ENCODE measurements at regions of chr17 and their contacts with region 1.

Region 1: DNA sequence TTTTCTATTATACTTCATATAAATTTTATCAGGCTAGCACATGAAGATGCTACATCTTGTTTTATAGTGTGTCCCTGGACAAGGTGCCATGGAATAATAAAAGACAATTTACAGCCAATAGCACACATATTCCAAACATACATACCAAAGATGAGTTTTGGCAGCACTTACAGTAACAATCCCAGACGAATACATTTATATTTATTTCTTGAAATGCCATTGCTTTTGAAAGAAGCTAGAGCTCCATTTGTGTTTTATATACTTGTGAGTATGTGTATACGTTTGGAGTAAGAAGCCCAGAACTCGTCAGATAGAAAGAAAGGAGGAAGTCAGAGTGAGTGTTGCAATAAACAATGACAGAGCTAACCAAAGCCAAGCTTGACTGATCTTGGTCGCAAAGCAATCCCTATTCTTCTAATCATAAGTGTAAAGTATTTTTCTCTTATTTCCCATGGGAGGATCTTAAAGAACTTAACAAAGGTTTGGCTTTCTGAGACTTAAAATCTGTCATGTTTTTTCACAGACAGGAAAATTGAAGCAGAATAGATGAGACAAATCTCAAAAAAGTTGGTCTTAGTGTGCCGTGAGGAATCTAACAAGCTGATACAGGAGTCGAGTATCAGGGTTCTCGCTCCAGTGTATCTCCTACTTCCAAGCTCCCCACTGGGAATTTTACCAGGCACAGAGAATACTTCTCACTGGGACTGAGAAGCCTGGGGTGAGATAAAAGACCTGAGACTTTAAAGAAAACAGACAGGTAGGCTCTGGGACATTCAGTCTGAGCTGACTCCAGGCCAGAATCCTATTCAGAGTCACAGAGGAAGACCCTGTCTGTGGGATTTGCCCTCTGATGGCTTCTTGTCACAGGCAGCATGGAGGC is 175.4 kb downstream of the AATF start:
- DNase-seq: no peak
- ATAC-seq: no peak
- H3K4me3 ChIP-seq: no peak overlapping the region
- H3K27ac ChIP-seq: no peak overlapping the region
- H3K4me1 ChIP-seq: no peaks in the 10 kb centered on the region
- H3K27me3 ChIP-seq: no peaks in the 10 kb centered on the region
- CTCF ChIP-seq: no peak

Region 2: GRCh38 chr17:37067555-37068111 is 56.5 kb before region 1 on chr17:
- intact Hi-C with region 1: loop called in 1 of 2 experiments (anchors 10 kb)
- DNase-seq: peak; percentile 72 to 85
- ATAC-seq: peak; percentile 91 to 97 (median 96)
- H3K4me3 ChIP-seq: no peak overlapping the region
- H3K27ac ChIP-seq: peak overlapping the region; percentile 54
- H3K4me1 ChIP-seq: peaks cover 4% of the 10 kb centered on the region
- H3K27me3 ChIP-seq: peaks cover 0 to 3% (median 0%) of the 10 kb centered on the region in 3 donors
- CTCF ChIP-seq: no peak

Region 3: GRCh38 chr17:37541880-37542660 is 417.9 kb after region 1 on chr17:
- intact Hi-C with region 1: no loop called
- DNase-seq: no peak
- ATAC-seq: no peak
- H3K4me3 ChIP-seq: no peak overlapping the region
- H3K27ac ChIP-seq: no peak overlapping the region
- H3K4me1 ChIP-seq: peaks cover 4% of the 10 kb centered on the region
- H3K27me3 ChIP-seq: no peaks in the 10 kb centered on the region
- CTCF ChIP-seq: no peak

Measured in psoas muscle (tissue), 8 donors.